Uterus (tissue), 4 donors: ENCODE measurements at regions of chr6 and their contacts with region 1.

Region 1: GRCh38 chr6:139364302-139364981 is 10.0 kb downstream of the CITED2 start:
- DNase-seq: no peak
- H3K4me3 ChIP-seq: no peak overlapping the region
- H3K27ac ChIP-seq: no peak overlapping the region
- H3K4me1 ChIP-seq: no peaks in the 10 kb centered on the region
- H3K27me3 ChIP-seq: no peaks in the 10 kb centered on the region
- CTCF ChIP-seq: peak; percentile 72 to 83 (median 76)
- POLR2A ChIP-seq: no peak

Region 2: GRCh38 chr6:138817822-138818308 is 546.6 kb before region 1 on chr6:
- intact Hi-C with region 1: loop called (anchors 10 kb)
- DNase-seq: no peak
- H3K4me3 ChIP-seq: no peak overlapping the region
- H3K27ac ChIP-seq: no peak overlapping the region
- H3K4me1 ChIP-seq: no peaks in the 10 kb centered on the region
- H3K27me3 ChIP-seq: no peaks in the 10 kb centered on the region
- CTCF ChIP-seq: no peak
- POLR2A ChIP-seq: no peak

Region 3: DNA sequence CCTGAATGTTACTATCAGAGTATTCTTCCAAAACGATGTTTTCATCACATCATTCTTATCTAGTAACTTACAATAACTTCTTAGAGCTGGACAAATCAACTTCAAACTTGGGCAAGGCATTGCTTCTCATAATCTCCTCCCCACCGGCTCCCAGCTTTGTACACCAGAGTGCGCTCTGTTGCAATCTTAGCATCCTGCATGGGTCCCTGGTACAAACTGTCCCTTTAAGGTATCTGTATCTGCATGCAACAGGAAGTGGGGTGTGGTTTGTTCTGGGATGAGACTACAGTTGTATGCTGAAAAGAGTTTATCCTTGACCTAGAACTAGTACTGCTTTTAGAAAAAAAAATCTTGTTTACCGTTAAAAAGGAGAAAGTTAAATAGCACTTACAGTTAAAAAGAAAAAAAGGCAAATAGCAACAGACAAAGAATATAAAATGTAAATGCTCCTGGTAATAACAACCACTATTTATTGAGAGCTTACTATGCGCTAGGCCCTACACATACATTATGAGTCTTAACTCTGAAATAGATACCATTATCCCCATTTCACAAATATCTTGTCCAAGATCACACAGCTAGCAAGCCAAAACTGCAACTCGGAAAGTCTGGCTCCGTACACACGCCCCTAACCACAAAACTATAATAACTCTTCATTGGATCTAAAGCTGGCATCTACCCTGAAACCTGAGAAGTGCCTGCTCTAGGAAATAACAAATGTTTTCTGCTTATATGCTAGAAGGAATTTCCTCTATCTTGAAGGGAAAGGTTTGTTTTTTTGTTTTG is 239.4 kb before region 1 on chr6:
- intact Hi-C with region 1: loop called (anchors 10 kb)
- DNase-seq: peak in 1 of 2 donors; percentile 37
- H3K4me3 ChIP-seq: no peak overlapping the region
- H3K27ac ChIP-seq: no peak overlapping the region
- H3K4me1 ChIP-seq: no peaks in the 10 kb centered on the region
- H3K27me3 ChIP-seq: no peaks in the 10 kb centered on the region
- CTCF ChIP-seq: no peak
- POLR2A ChIP-seq: no peak